ENCODE measurements at regions of chr2 and their contacts with region 1.

Region 1: DNA sequence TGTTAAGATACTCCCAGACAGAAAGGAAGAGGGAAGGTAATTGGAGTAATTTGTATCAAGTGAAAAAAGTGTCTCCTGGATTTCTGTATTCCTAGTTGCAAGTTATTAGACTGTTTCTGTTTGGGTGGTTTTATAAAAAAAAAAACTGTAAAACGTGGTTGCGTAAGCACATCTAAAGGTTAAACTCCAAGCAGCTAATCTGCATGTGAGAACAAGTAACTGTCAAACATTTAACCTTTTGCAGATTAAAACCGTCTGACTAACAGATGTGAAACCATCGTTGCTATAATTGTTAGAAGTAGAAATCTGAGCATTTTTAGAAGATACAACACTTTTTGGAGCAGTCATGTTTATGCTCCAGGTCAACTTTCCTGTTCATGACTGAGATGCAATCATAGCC is 72.3 kb downstream of the AFF3 start:
- DNase-seq: no peak
- H3K4me3 ChIP-seq: no peak overlapping the region
- CTCF ChIP-seq: no peak

Region 2: GRCh38 chr2:100031604-100032003 is 38.5 kb before region 1 on chr2:
- in situ Hi-C with region 1: loop called (anchors 5 kb)
- DNase-seq: no peak
- H3K4me3 ChIP-seq: no peak overlapping the region
- CTCF ChIP-seq: no peak

Region 3: GRCh38 chr2:100376823-100377222 is 306.7 kb after region 1 on chr2:
- in situ Hi-C with region 1: no loop called
- DNase-seq: no peak
- H3K4me3 ChIP-seq: no peak overlapping the region
- CTCF ChIP-seq: no peak